ENCODE measurements at regions of chr1 and their contacts with region 1.

Region 1: GRCh38 chr1:20343149-20343937 is 52.7 kb downstream of the VWA5B1 start:
- DNase-seq: peak in 6 of 9 donors; percentile 14 to 38 (median 20)
- ATAC-seq: peak; percentile 77
- H3K4me3 ChIP-seq: no peak overlapping the region
- H3K4me3 Mint-ChIP-seq: peak overlapping the region in 6 of 10 donors; percentile 23 to 74 (median 52)
- H3K27ac ChIP-seq: no peak overlapping the region
- H3K27ac Mint-ChIP-seq: no peak overlapping the region
- H3K4me1 ChIP-seq: peaks cover 0 to 4% of the 10 kb centered on the region in 2 donors
- H3K4me1 Mint-ChIP-seq: peaks cover 0 to 7% (median 5%) of the 10 kb centered on the region in 7 donors
- H3K27me3 ChIP-seq: peaks cover 0 to 4% of the 10 kb centered on the region in 2 donors
- H3K27me3 Mint-ChIP-seq: peaks cover 19 to 38% (median 29%) of the 10 kb centered on the region in 5 donors

Region 2: GRCh38 chr1:19013826-19014548 is 1329.4 kb before region 1 on chr1:
- CTCF ChIA-PET with region 1: no interaction called
- POLR2A ChIA-PET with region 1: no interaction called
- intact Hi-C with region 1: no loop called
- DNase-seq: no peak
- ATAC-seq: no peak
- H3K4me3 ChIP-seq: no peak overlapping the region
- H3K4me3 Mint-ChIP-seq: no peak overlapping the region
- H3K27ac ChIP-seq: no peak overlapping the region
- H3K27ac Mint-ChIP-seq: peak overlapping the region in 1 of 9 donors; percentile 18
- H3K4me1 ChIP-seq: peaks cover 8 to 13% of the 10 kb centered on the region in 2 donors
- H3K4me1 Mint-ChIP-seq: peaks cover 15 to 33% (median 29%) of the 10 kb centered on the region in 7 donors
- H3K27me3 ChIP-seq: no peaks in the 10 kb centered on the region
- H3K27me3 Mint-ChIP-seq: peaks cover 0 to 4% (median under 1%) of the 10 kb centered on the region in 5 donors

Region 3: GRCh38 chr1:20233394-20233793 is 109.9 kb before region 1 on chr1:
- CTCF ChIA-PET with region 1: interaction called, 4 read pairs
- POLR2A ChIA-PET with region 1: no interaction called
- intact Hi-C with region 1: loop called in 1 of 2 experiments (anchors 5 kb)
- DNase-seq: peak in 5 of 9 donors; percentile 20 to 40 (median 30)
- ATAC-seq: peak; percentile 61
- H3K4me3 ChIP-seq: no peak overlapping the region
- H3K4me3 Mint-ChIP-seq: no peak overlapping the region
- H3K27ac ChIP-seq: no peak overlapping the region
- H3K27ac Mint-ChIP-seq: no peak overlapping the region
- H3K4me1 ChIP-seq: no peaks in the 10 kb centered on the region
- H3K4me1 Mint-ChIP-seq: peaks cover 0 to 6% (median 0%) of the 10 kb centered on the region in 7 donors
- H3K27me3 ChIP-seq: no peaks in the 10 kb centered on the region
- H3K27me3 Mint-ChIP-seq: peaks cover 18 to 72% (median 37%) of the 10 kb centered on the region in 5 donors

Region 4: GRCh38 chr1:20302093-20302471 is 41.3 kb before region 1 on chr1:
- CTCF ChIA-PET with region 1: no interaction called
- POLR2A ChIA-PET with region 1: no interaction called
- intact Hi-C with region 1: no loop called
- DNase-seq: no peak
- ATAC-seq: no peak
- H3K4me3 ChIP-seq: no peak overlapping the region
- H3K4me3 Mint-ChIP-seq: no peak overlapping the region
- H3K27ac ChIP-seq: no peak overlapping the region
- H3K27ac Mint-ChIP-seq: no peak overlapping the region
- H3K4me1 ChIP-seq: no peaks in the 10 kb centered on the region
- H3K4me1 Mint-ChIP-seq: no peaks in the 10 kb centered on the region
- H3K27me3 ChIP-seq: no peaks in the 10 kb centered on the region
- H3K27me3 Mint-ChIP-seq: peaks cover 0 to 14% (median 0%) of the 10 kb centered on the region in 5 donors

Region 5: GRCh38 chr1:20411196-20411980 is 68.0 kb after region 1 on chr1:
- CTCF ChIA-PET with region 1: no interaction called
- POLR2A ChIA-PET with region 1: no interaction called
- intact Hi-C with region 1: no loop called
- DNase-seq: no peak
- ATAC-seq: no peak
- H3K4me3 ChIP-seq: no peak overlapping the region
- H3K4me3 Mint-ChIP-seq: no peak overlapping the region
- H3K27ac ChIP-seq: no peak overlapping the region
- H3K27ac Mint-ChIP-seq: no peak overlapping the region
- H3K4me1 ChIP-seq: no peaks in the 10 kb centered on the region
- H3K4me1 Mint-ChIP-seq: peaks cover 0 to 4% (median 0%) of the 10 kb centered on the region in 7 donors
- H3K27me3 ChIP-seq: no peaks in the 10 kb centered on the region
- H3K27me3 Mint-ChIP-seq: peaks cover 0 to 20% (median 10%) of the 10 kb centered on the region in 5 donors

Measured in naive thymus-derived CD4-positive, alpha-beta T cell (primary cell).